ENCODE measurements at regions of chr20 and their contacts with region 1.

Region 1: DNA sequence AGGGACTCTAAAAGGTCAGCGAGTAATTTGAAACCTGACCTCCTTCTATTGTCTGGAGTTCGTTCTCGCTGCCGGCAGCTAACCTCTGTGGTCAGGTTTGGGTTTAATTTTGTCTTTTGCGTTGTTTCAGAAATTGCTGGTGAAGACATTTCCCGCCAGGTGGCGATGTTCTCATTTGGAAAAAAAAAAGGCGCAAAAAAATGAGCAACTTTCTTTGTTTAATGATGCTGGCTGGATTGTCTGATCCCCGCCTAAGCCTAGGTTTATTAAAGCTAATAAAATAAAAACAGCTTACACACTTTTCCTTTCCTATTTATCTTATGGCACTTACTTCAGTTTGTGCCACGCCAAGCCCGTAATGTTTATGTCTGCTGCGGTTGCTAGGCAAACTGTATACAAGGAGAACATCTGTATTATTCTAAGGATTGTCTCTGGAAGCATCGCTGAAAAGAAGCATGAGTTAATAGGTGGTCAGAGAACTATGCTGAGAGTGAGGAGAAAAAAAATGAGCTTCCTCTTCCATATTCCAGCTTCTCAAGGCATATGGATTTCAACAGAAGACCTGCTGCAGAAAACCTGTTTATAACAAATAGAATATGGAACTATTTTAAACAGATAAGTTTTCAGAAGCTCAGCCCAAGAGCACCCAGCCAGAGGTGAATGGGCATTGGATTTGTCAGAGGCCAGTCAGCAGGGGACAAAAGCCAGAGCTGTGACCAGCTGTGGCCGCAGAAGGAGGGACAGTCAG is 205.7 kb downstream of the DOK5 start:
- DNase-seq: peak; percentile 19
- CTCF ChIP-seq: peak; percentile 65

Region 2: DNA sequence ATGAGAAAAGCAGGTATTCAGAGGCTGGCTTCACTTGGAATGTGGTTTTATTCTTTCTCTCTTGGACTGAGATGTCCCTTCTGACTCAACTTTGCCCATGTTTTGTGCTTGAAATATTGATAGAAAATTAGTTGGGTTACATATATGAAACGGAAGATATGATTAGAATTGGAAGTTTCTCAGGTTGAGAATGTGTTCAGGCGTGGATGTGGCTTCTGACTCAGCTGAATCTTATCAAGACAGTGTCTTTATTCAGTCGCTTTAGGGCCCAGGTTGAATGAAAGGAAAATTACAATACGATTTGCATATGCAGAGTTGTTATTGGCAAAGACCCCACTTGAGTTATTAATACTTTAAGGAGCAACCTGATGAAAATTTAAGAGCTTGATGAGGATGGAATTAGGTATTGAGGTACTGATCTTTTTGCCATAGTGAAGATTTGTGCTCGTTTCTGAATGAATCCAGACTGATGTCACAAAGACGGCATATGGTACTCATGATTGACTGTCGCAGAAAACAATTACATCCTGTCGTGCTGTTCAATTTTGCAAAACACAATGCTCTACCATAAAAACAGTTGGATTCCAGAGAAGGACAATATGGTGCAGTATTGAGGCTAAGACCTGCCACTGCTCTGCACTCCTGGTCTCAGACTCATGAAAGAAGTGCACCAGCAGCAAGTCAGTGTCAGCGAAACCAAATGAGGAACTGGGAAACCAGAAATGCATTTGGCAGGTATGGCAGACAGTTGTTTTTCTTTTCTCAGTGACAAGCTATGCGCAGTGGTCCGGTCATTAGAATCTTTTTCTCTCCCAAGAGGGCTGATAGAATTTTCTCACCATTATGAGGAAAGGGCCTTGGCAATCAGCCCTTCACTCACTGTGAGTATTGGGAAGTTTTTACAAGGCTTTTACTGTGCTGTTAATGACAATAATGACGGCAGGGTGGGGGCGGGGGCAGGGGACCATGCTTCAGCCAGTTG is 47.4 kb before region 1 on chr20:
- CTCF ChIA-PET with region 1: no interaction called
- POLR2A ChIA-PET with region 1: no interaction called
- DNase-seq: peak; percentile 64
- CTCF ChIP-seq: no peak

Region 3: DNA sequence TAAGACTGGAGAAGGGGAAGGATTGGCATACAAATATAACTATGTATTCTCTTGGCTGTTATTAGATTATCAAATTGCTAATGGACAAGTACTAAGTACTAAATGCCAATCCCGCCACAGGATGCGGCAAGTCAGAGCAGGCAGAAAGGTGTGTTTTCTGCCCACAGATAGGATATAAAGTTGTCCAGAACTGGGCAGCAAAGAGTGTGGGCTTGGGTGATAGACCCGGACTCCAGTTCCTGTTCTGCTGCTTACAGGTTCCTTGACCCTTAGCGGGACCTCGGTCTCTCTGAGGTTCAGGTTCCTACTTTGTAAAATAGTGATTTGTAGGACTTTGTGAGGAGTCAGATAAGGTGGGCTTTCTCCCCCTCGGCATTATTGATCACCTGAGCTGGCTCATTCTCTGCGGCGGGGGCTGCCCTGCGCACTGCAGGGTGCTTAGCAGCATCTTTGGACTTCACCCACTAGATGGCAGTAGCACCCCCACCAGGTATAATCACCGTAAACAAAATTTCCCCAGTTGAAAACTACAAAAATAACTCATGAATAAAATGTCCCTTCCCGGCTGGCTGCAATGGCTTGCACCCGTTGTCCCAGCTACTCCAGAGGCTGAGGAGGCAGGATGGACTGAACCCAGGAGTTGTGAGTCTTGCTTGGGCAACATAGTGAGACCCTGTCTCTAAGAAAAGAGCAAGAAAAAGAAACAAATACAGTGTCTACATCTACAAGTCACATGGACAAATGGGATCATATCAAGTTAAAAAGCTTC is 12.6 kb before region 1 on chr20:
- CTCF ChIA-PET with region 1: interaction called, 17 read pairs
- POLR2A ChIA-PET with region 1: no interaction called
- DNase-seq: peak; percentile 46
- CTCF ChIP-seq: peak; percentile 68